CD8-positive, alpha-beta memory T cell (primary cell): ENCODE measurements at regions of chr9 and their contacts with region 1.

Region 1: GRCh38 chr9:34500623-34501267 is 22.0 kb downstream of the ENHO start:
- DNase-seq: peak; percentile 50 to 79 (median 61)
- H3K4me3 ChIP-seq: no peak overlapping the region
- H3K4me3 Mint-ChIP-seq: no peak overlapping the region
- H3K27ac ChIP-seq: no peak overlapping the region
- H3K27ac Mint-ChIP-seq: no peak overlapping the region
- H3K4me1 ChIP-seq: no peaks in the 10 kb centered on the region
- H3K4me1 Mint-ChIP-seq: peaks cover 0 to 2% (median 0%) of the 10 kb centered on the region in 3 donors
- H3K27me3 ChIP-seq: no peaks in the 10 kb centered on the region
- H3K27me3 Mint-ChIP-seq: peaks cover 10 to 20% of the 10 kb centered on the region in 2 donors

Region 2: GRCh38 chr9:34428325-34428958 is 72.3 kb before region 1 on chr9:
- CTCF ChIA-PET with region 1: no interaction called
- POLR2A ChIA-PET with region 1: no interaction called
- DNase-seq: no peak
- H3K4me3 ChIP-seq: no peak overlapping the region
- H3K4me3 Mint-ChIP-seq: no peak overlapping the region
- H3K27ac ChIP-seq: no peak overlapping the region
- H3K27ac Mint-ChIP-seq: no peak overlapping the region
- H3K4me1 ChIP-seq: no peaks in the 10 kb centered on the region
- H3K4me1 Mint-ChIP-seq: no peaks in the 10 kb centered on the region
- H3K27me3 ChIP-seq: no peaks in the 10 kb centered on the region
- H3K27me3 Mint-ChIP-seq: no peaks in the 10 kb centered on the region

Region 3: GRCh38 chr9:34443533-34443932 is 57.2 kb before region 1 on chr9:
- CTCF ChIA-PET with region 1: interaction called, 13 read pairs
- POLR2A ChIA-PET with region 1: no interaction called
- DNase-seq: no peak
- H3K4me3 ChIP-seq: no peak overlapping the region
- H3K4me3 Mint-ChIP-seq: no peak overlapping the region
- H3K27ac ChIP-seq: no peak overlapping the region
- H3K27ac Mint-ChIP-seq: peak overlapping the region in 2 of 8 donors; percentile 17 to 24
- H3K4me1 ChIP-seq: peaks cover 8% of the 10 kb centered on the region
- H3K4me1 Mint-ChIP-seq: peaks cover 10 to 22% (median 11%) of the 10 kb centered on the region in 3 donors
- H3K27me3 ChIP-seq: no peaks in the 10 kb centered on the region
- H3K27me3 Mint-ChIP-seq: no peaks in the 10 kb centered on the region